ENCODE measurements at regions of chr20 and their contacts with region 1.

Region 1: GRCh38 chr20:5092765-5093339 is 26.9 kb downstream of the PCNA start:
- DNase-seq: no peak
- ATAC-seq: no peak
- H3K4me3 ChIP-seq: no peak overlapping the region
- H3K4me3 Mint-ChIP-seq: no peak overlapping the region
- H3K27ac ChIP-seq: no peak overlapping the region
- H3K27ac Mint-ChIP-seq: peak overlapping the region in 5 of 9 donors; percentile 13 to 76 (median 18)
- H3K4me1 ChIP-seq: peaks cover 8 to 9% of the 10 kb centered on the region in 2 donors
- H3K4me1 Mint-ChIP-seq: peaks cover 10 to 18% (median 15%) of the 10 kb centered on the region in 7 donors
- H3K27me3 ChIP-seq: no peaks in the 10 kb centered on the region
- H3K27me3 Mint-ChIP-seq: no peaks in the 10 kb centered on the region

Region 2: DNA sequence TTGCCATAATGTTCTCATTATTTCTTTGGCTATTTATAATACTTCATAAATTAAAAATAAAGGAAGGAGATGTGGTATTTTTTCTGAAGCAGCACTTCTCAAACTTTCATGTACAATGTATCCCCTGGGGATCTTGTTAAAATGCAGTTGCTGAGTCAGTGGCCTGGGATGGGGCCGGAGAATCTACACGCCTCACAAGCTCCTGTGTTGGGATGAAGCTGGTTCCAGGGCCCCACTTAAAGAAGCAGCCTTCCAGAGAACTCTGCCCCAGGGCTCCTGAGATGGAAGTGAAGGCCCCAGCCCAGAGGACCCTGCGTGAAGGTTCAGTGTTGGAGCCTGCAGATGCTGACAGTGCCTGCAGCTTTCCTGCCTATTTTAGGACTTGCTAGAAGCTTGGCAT is 51.4 kb before region 1 on chr20:
- CTCF ChIA-PET with region 1: no interaction called
- POLR2A ChIA-PET with region 1: no interaction called
- intact Hi-C with region 1: no loop called
- DNase-seq: no peak
- ATAC-seq: no peak
- H3K4me3 ChIP-seq: no peak overlapping the region
- H3K4me3 Mint-ChIP-seq: no peak overlapping the region
- H3K27ac ChIP-seq: no peak overlapping the region
- H3K27ac Mint-ChIP-seq: no peak overlapping the region
- H3K4me1 ChIP-seq: peaks cover 0 to 12% of the 10 kb centered on the region in 2 donors
- H3K4me1 Mint-ChIP-seq: peaks cover 0 to 12% (median 5%) of the 10 kb centered on the region in 7 donors
- H3K27me3 ChIP-seq: no peaks in the 10 kb centered on the region
- H3K27me3 Mint-ChIP-seq: peaks cover 0 to 16% (median 0%) of the 10 kb centered on the region in 5 donors

Region 3: GRCh38 chr20:5078399-5078958 is 14.4 kb before region 1 on chr20:
- CTCF ChIA-PET with region 1: interaction called, 5 read pairs
- POLR2A ChIA-PET with region 1: interaction called, 4 read pairs
- intact Hi-C with region 1: loop called in 1 of 2 experiments (anchors 1 kb)
- DNase-seq: peak; percentile 39 to 78 (median 74)
- ATAC-seq: peak; percentile 95
- H3K4me3 ChIP-seq: peak overlapping the region; percentile 33
- H3K4me3 Mint-ChIP-seq: peak overlapping the region; percentile 61 to 92 (median 89)
- H3K27ac ChIP-seq: peak overlapping the region; percentile 79
- H3K27ac Mint-ChIP-seq: peak overlapping the region; percentile 97 to 100 (median 99)
- H3K4me1 ChIP-seq: peaks cover 16 to 25% of the 10 kb centered on the region in 2 donors
- H3K4me1 Mint-ChIP-seq: peaks cover 24 to 54% (median 32%) of the 10 kb centered on the region in 7 donors
- H3K27me3 ChIP-seq: no peaks in the 10 kb centered on the region
- H3K27me3 Mint-ChIP-seq: no peaks in the 10 kb centered on the region

Region 4: DNA sequence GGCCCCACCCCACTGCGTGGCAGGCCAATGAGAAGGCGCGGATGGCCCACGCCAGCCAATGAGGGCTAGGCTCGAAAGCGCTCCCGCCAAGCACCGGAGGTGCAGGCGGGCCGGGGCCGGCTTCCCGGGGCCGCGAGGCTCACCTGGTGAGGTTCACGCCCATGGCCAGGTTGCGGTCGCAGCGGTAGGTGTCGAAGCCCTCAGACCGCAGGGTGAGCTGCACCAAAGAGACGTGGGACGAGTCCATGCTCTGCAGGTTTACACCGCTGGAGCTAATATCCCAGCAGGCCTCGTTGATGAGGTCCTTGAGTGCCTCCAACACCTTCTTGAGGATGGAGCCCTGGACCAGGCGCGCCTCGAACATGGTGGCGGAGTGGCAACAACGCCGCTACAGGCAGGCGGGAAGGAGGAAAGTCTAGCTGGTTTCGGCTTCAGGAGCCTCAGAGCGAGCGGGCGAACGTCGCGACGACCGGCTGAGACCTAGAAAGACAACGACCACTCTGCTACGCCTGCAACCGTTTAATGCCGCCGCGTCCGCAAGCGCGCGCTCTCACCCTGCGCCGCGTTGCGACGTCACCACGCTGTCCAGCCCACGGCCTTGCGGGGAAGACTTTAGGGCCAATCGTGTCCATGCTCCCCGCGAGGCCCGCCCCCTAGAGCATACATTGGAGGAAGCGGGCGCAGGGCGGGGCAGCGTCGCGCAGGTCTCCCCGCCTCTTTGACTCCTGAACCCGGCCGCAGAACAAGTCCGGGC is 26.8 kb after region 1 on chr20 and contains the start of gene PCNA:
- CTCF ChIA-PET with region 1: interaction called, 10 read pairs
- POLR2A ChIA-PET with region 1: interaction called, 3 read pairs
- intact Hi-C with region 1: no loop called
- DNase-seq: peak; percentile 85 to 96 (median 94)
- ATAC-seq: peak; percentile 97
- H3K4me3 ChIP-seq: peak within 1 kb of the TSS; percentile 98
- H3K4me3 Mint-ChIP-seq: peak within 1 kb of the TSS; percentile 87 to 99 (median 96)
- H3K27ac ChIP-seq: peak within 1 kb of the TSS; percentile 73
- H3K27ac Mint-ChIP-seq: peak within 1 kb of the TSS; percentile 82 to 99 (median 96)
- H3K4me1 ChIP-seq: peaks cover 9 to 22% of the 10 kb centered on the region in 2 donors
- H3K4me1 Mint-ChIP-seq: peaks cover 19 to 66% (median 32%) of the 10 kb centered on the region in 7 donors
- H3K27me3 ChIP-seq: no peaks in the 10 kb centered on the region
- H3K27me3 Mint-ChIP-seq: peaks cover 0 to 2% (median 0%) of the 10 kb centered on the region in 5 donors
- total RNA-seq, gene PCNA: 21.6 to 392 (median 39.3) TPM

Measured in naive thymus-derived CD4-positive, alpha-beta T cell (primary cell).